Activated CD4-positive, alpha-beta memory T cell treated with anti-CD3 and anti-CD28 coated beads for 36 hours (primary cell): ENCODE measurements at regions of chr10 and their contacts with region 1.

Region 1: GRCh38 chr10:70363971-70364771 is 18.3 kb downstream of the LRRC20 start:
- DNase-seq: peak; percentile 91
- H3K4me3 Mint-ChIP-seq: no peak overlapping the region
- H3K27ac Mint-ChIP-seq: no peak overlapping the region
- H3K4me1 Mint-ChIP-seq: peaks cover 7% of the 10 kb centered on the region
- H3K27me3 Mint-ChIP-seq: no peaks in the 10 kb centered on the region

Region 2: GRCh38 chr10:70093335-70093944 is 270.7 kb before region 1 on chr10:
- CTCF ChIA-PET with region 1: interaction called, 7 read pairs
- POLR2A ChIA-PET with region 1: no interaction called
- intact Hi-C with region 1: loop called (anchors 5 kb)
- DNase-seq: peak; percentile 51
- H3K4me3 Mint-ChIP-seq: peak overlapping the region; percentile 58
- H3K27ac Mint-ChIP-seq: peak overlapping the region; percentile 7
- H3K4me1 Mint-ChIP-seq: peaks cover 34% of the 10 kb centered on the region
- H3K27me3 Mint-ChIP-seq: no peaks in the 10 kb centered on the region

Region 3: DNA sequence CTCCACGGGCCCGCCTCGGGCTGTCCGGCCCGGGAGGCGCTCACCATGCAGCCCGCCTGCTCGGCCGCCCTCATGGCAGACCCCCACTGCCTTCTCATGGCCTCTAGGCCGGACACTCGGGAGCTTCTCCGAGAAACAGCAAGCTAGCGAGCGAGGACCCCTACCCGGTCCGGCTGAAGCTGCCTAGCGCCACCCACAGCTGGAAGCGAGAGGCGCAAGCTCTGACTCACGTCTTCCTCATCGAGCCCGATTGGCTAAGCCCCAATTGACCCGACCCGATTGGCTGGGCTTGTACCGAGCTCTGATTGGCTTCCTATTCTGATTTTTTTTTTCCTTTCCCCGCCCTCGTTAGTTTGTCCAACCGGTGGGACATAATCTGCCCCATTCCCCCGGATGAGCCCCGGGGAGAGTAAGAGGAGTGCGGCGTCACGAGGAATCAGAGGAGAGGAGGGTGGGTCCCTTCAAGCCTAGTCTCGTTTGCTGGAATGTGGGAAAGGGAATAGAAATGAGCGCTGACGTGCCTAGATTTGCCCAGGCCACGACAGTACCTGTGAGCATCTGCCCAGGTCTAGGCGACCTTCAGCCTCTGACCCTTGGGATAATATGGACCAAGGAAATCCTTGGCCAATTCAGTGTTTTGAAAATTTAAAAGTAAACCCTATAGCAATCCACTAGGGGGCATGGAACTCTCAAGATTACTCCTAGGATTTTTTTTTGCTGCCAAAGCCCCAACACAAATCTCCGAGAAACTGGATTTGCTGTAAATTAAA is 217.5 kb before region 1 on chr10 and contains the start of gene TYSND1:
- CTCF ChIA-PET with region 1: interaction called, 20 read pairs
- POLR2A ChIA-PET with region 1: no interaction called
- intact Hi-C with region 1: no loop called
- DNase-seq: peak; percentile 96
- H3K4me3 Mint-ChIP-seq: peak within 1 kb of the TSS; percentile 89
- H3K27ac Mint-ChIP-seq: peak within 1 kb of the TSS; percentile 90
- H3K4me1 Mint-ChIP-seq: peaks cover 21% of the 10 kb centered on the region
- H3K27me3 Mint-ChIP-seq: no peaks in the 10 kb centered on the region
- total RNA-seq, gene TYSND1: 10.9 to 12.1 TPM

Region 4: DNA sequence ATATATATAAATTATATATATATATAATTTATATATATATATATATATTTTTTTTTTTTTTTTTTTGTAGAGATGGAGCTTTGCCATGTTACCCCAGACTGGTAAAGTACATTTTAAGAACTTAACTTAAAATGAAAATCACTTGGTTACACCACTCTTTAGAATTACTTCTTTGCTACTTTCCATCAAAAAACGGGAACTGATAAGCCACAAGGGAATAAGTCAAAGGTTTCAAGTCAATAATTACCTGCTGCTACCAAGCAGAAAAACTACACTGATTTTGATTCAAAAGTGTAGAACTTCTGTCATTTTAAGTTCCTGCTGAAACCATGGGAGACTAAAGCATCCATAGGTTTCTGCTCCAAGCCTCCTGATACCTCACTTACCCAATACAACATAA is 143.1 kb before region 1 on chr10:
- CTCF ChIA-PET with region 1: interaction called, 383 read pairs
- POLR2A ChIA-PET with region 1: interaction called, 3 read pairs
- intact Hi-C with region 1: loop called (anchors 1 kb)
- DNase-seq: no peak
- H3K4me3 Mint-ChIP-seq: no peak overlapping the region
- H3K27ac Mint-ChIP-seq: no peak overlapping the region
- H3K4me1 Mint-ChIP-seq: peaks cover 37% of the 10 kb centered on the region
- H3K27me3 Mint-ChIP-seq: no peaks in the 10 kb centered on the region

Region 5: GRCh38 chr10:70233109-70233938 is 130.8 kb before region 1 on chr10 and contains the start of gene PPA1:
- CTCF ChIA-PET with region 1: interaction called, 32 read pairs
- POLR2A ChIA-PET with region 1: interaction called, 9 read pairs
- intact Hi-C with region 1: no loop called
- DNase-seq: peak; percentile 99
- H3K4me3 Mint-ChIP-seq: peak within 1 kb of the TSS; percentile 85
- H3K27ac Mint-ChIP-seq: peak within 1 kb of the TSS; percentile 97
- H3K4me1 Mint-ChIP-seq: peaks cover 30% of the 10 kb centered on the region
- H3K27me3 Mint-ChIP-seq: peaks cover 2% of the 10 kb centered on the region
- total RNA-seq, gene PPA1: 359 to 368 TPM

Region 6: GRCh38 chr10:70272925-70273316 is 91.2 kb before region 1 on chr10:
- CTCF ChIA-PET with region 1: interaction called, 43 read pairs
- POLR2A ChIA-PET with region 1: no interaction called
- intact Hi-C with region 1: no loop called
- DNase-seq: peak; percentile 24
- H3K4me3 Mint-ChIP-seq: no peak overlapping the region
- H3K27ac Mint-ChIP-seq: peak overlapping the region; percentile 56
- H3K4me1 Mint-ChIP-seq: peaks cover 26% of the 10 kb centered on the region
- H3K27me3 Mint-ChIP-seq: no peaks in the 10 kb centered on the region

Region 7: DNA sequence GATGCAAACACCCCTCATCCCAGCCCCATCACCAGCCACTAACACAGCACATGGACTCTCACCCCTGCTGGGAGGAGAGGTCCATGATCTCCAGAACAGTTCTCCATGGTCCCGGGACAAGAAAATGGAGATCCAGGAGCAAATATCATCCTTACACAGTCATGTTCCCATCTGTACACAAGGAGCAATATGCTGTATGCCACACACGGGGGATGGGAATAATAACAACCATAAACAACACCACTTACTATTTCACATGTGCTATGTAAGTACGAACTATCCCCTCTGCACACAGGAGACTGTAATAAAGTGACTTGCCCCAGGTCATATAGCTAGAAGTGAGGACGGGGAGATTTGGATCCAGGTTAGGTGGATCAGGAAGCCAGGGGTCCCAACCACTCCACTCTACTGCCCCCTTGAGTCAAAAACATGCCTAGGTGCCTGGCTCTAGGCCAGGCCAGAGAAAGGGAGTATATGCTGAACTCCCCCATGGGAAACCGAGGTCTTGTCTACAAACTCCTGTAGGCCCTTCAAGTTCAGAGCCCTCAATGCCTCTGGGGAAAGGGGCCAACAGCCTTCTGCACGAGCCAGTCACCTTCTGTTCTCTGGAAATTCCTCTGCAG is 15.8 kb before region 1 on chr10:
- CTCF ChIA-PET with region 1: interaction called, 30 read pairs
- POLR2A ChIA-PET with region 1: no interaction called
- intact Hi-C with region 1: no loop called
- DNase-seq: peak; percentile 53
- H3K4me3 Mint-ChIP-seq: no peak overlapping the region
- H3K27ac Mint-ChIP-seq: no peak overlapping the region
- H3K4me1 Mint-ChIP-seq: no peaks in the 10 kb centered on the region
- H3K27me3 Mint-ChIP-seq: no peaks in the 10 kb centered on the region

Region 8: DNA sequence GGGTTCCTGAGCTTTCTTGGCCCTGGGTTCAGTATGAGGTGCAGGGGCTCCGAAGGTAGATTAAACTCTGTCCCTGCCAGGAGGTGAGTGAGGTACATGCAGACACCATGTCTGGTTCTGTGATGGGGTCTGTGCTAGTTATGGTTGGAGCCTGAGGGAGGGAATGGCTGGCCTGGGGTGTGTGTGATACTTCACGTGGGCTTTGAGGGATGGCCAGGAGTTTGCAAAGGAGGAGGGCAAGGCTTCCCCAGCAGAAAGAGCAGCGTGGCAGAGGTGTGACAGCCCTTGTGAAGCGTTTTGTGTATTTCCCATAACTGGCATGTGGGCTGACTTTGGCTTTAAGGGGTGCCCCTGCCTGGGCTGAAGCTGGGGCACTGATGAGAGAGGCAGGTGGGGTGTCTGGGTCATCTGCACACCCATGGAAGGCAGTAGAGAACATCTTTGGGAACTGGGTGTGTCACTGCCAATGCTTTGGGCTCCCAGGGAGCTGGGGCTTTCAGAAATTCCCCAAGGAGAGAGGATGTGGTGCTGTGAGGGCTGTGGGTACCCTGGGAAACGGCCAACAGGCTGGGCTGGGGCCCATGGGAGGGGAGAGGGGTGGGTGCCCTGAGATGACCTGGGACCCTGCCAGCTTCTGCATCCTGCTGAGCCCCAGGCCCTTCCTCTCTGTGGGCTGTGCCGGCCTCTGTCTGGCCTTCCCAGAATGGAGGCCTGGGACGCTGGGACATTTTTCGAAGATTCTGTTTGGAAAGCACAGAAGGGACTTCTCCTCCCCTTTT is 119.0 kb after region 1 on chr10:
- CTCF ChIA-PET with region 1: no interaction called
- POLR2A ChIA-PET with region 1: no interaction called
- intact Hi-C with region 1: no loop called
- DNase-seq: no peak
- H3K4me3 Mint-ChIP-seq: no peak overlapping the region
- H3K27ac Mint-ChIP-seq: no peak overlapping the region
- H3K4me1 Mint-ChIP-seq: peaks cover 19% of the 10 kb centered on the region
- H3K27me3 Mint-ChIP-seq: peaks cover 2% of the 10 kb centered on the region